T-cell (primary cell): ENCODE measurements at regions of chr1 and their contacts with region 1.

Region 1: DNA sequence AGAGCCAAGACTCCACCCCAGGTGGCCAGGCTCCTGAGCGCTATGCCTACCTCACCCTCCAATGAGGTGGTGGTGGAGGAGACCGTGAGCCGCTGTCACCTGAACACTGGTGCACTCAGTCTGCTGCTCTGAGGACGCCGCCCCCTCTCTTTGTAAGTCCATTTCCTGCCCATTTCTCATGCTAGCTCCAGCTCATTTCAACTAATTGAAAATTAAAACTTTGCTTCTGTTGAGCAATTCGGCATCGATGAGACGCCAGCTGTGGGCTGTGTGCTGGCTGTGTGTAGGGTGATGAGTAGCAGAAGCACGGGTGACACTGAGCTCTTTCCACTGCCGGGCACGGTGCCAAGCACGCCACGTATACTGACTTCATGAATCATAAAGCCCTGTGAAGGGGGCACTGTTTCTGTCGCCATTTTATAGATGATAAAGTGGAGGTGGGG is 11.2 kb downstream of the TNFRSF1B start:
- DNase-seq: peak; percentile 77 to 97 (median 88)
- ATAC-seq: peak; percentile 68 to 78 (median 72)
- H3K4me3 ChIP-seq: peak overlapping the region; percentile 37 to 51
- H3K4me3 Mint-ChIP-seq: peak overlapping the region; percentile 76 to 92 (median 78)
- H3K27ac ChIP-seq: peak overlapping the region; percentile 95
- H3K27ac Mint-ChIP-seq: peak overlapping the region; percentile 90 to 95
- H3K4me1 ChIP-seq: peaks cover 48 to 100% of the 10 kb centered on the region in 2 experiments
- H3K4me1 Mint-ChIP-seq: peaks cover 89 to 97% (median 96%) of the 10 kb centered on the region in 3 donors
- H3K27me3 ChIP-seq: no peaks in the 10 kb centered on the region
- H3K27me3 Mint-ChIP-seq: no peaks in the 10 kb centered on the region

Region 2: DNA sequence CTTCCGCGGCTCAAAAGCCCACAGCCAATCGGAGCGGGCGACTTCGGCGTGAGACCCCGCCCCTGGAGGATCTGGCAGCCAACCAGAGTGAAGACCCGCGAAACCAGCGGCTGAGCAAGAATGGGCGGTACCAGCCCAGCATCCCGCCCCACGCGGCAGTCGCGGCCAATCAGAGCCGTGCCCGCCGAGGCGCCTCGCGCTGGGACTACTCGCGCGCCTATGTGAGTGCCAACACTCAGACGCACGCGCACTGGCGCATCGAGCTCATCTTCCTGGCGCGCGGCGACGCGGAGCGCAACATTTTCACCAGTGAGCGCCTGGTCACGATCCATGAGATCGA is 676.5 kb before region 1 on chr1:
- CTCF ChIA-PET with region 1: no interaction called
- POLR2A ChIA-PET with region 1: no interaction called
- DNase-seq: peak in 16 of 35 experiments; percentile 3 to 61 (median 17)
- ATAC-seq: peak in 3 of 4 experiments; percentile 47 to 83 (median 53)
- H3K4me3 ChIP-seq: no peak overlapping the region
- H3K4me3 Mint-ChIP-seq: peak overlapping the region in 2 of 3 donors; percentile 34 to 41
- H3K27ac ChIP-seq: no peak overlapping the region
- H3K27ac Mint-ChIP-seq: no peak overlapping the region
- H3K4me1 ChIP-seq: no peaks in the 10 kb centered on the region
- H3K4me1 Mint-ChIP-seq: no peaks in the 10 kb centered on the region
- H3K27me3 ChIP-seq: peaks cover 2 to 42% of the 10 kb centered on the region in 2 experiments
- H3K27me3 Mint-ChIP-seq: peaks cover 9 to 30% of the 10 kb centered on the region in 2 donors

Region 3: DNA sequence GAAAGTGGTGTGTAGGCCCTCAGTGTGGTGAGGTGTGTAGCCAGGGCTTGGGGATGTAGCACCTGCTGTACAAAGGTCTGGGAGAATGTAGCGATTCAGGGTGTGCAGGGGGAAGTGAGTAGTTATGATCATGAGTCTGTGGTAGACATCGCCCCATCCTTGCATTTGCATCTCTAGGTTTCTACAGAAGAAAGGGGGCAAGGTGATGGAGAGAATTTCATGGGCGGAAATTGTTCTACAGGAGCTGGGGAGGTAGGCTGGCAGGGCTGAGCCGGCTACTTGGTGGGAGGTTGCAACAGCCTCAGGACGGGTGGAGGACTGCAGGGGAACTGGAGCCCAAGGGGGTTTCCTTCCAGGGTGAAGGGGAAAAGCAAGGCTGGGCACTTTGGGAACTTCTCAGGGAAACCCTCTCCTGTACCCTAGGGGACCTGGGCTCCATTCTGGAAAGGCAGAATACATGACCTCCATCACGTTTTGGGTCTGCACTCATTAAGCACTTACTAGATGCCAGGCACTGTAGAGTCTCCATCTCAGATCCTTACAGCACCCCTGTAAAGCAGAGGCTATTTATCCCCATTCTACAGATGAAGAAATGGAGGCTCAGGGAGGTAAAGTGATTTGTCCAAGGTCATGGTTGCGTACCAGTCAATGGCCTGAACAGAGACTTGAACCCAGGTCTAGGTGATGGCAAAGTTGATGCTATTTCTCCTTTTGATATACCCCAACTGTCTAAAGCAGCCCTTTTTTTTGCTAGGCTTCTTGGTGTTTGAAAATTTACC is 25.7 kb before region 1 on chr1:
- CTCF ChIA-PET with region 1: interaction called in 1 of 2 experiments, 10 read pairs
- POLR2A ChIA-PET with region 1: interaction called, 5 to 10 read pairs
- DNase-seq: peak in 1 of 35 experiments; percentile 31
- ATAC-seq: no peak
- H3K4me3 ChIP-seq: no peak overlapping the region
- H3K4me3 Mint-ChIP-seq: peak overlapping the region; percentile 11 to 59 (median 26)
- H3K27ac ChIP-seq: peak overlapping the region; percentile 93
- H3K27ac Mint-ChIP-seq: peak overlapping the region; percentile 97 to 100
- H3K4me1 ChIP-seq: peaks cover 58 to 80% of the 10 kb centered on the region in 2 experiments
- H3K4me1 Mint-ChIP-seq: peaks cover 87 to 92% (median 88%) of the 10 kb centered on the region in 3 donors
- H3K27me3 ChIP-seq: no peaks in the 10 kb centered on the region
- H3K27me3 Mint-ChIP-seq: no peaks in the 10 kb centered on the region

Region 4: GRCh38 chr1:12161662-12162458 is 16.2 kb before region 1 on chr1:
- CTCF ChIA-PET with region 1: interaction called in 1 of 2 experiments, 12 read pairs
- POLR2A ChIA-PET with region 1: interaction called, 5 read pairs
- DNase-seq: peak in 34 of 35 experiments; percentile 43 to 88 (median 63)
- ATAC-seq: peak; percentile 71 to 84 (median 80)
- H3K4me3 ChIP-seq: no peak overlapping the region
- H3K4me3 Mint-ChIP-seq: peak overlapping the region; percentile 43 to 52 (median 50)
- H3K27ac ChIP-seq: peak overlapping the region; percentile 78
- H3K27ac Mint-ChIP-seq: peak overlapping the region; percentile 90 to 92
- H3K4me1 ChIP-seq: peaks cover 23 to 95% of the 10 kb centered on the region in 2 experiments
- H3K4me1 Mint-ChIP-seq: peaks cover 71 to 82% (median 80%) of the 10 kb centered on the region in 3 donors
- H3K27me3 ChIP-seq: no peaks in the 10 kb centered on the region
- H3K27me3 Mint-ChIP-seq: no peaks in the 10 kb centered on the region